A549 (cell line): ENCODE measurements at regions of chr17 and their contacts with region 1.

Region 1: GRCh38 chr17:82370471-82371332 is 863 bp upstream of the UTS2R start:
- DNase-seq: no peak
- ATAC-seq: no peak; a peak in 1 of 6 replicates
- H3K4me3 ChIP-seq: peak overlapping the region; percentile 13; the same call in 1 of the 3 replicates
- H3K27ac ChIP-seq: no peak overlapping the region
- H3K4me1 ChIP-seq: peaks cover 8% of the 10 kb centered on the region; the same call in 1 of the 3 replicates
- CTCF ChIP-seq: no peak
- EP300 ChIP-seq: no peak
- POLR2A ChIP-seq: no peak
- RAD21 ChIP-seq: no peak

Region 2: DNA sequence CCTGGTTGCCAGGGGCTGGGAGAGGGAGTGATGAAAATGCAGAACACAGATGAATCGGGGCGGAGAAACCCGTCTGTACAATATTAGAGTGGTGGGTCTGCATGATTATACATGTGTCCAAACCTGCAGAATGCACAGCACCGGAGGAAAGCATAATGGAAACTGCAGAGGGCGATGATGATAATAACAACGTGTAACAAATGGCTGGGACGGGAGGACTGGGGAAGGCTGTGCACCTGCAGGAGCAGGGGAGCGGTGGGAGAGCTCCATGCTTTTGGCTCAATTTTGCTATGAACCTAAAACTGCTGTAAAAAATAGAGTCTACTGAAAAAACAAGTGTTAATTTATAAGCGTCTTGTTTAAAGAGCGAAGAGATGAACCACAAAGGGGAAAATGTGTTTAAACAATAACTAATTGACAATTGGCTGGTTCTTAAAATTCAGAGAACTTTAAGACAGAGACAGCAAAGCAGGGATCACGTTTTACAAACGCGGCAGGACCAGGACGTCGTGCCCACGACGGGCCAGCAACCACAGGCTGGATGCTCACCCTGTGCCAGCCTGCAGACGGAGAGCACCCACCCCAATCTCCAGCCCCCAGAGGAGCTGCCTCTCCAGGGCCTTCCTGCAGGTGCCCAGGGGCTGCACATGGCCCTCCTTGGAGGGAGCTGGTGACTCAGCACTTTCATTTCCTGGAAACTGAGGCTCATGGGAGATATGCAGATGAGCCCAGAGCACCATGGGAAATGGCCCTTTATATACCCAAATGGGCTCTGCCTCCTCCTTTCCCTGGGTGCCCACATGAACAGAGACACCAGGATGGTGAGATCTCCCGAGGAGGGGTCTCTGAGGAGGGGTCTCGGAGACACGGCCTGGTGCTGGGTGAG is 12.0 kb before region 1 on chr17 and contains the start of gene TEX19:
- CTCF ChIA-PET with region 1: interaction called, 14 read pairs
- POLR2A ChIA-PET with region 1: no interaction called
- DNase-seq: peak; percentile 54 to 70
- ATAC-seq: peak; percentile 40 to 58; a peak in 5 of 6 replicates
- H3K4me3 ChIP-seq: no peak within 1 kb of the TSS
- H3K27ac ChIP-seq: peak within 1 kb of the TSS; percentile 38 to 70; a peak in 5 of 6 replicates
- H3K4me1 ChIP-seq: peaks cover 18% of the 10 kb centered on the region
- CTCF ChIP-seq: no peak
- EP300 ChIP-seq: no peak
- POLR2A ChIP-seq: no peak
- RAD21 ChIP-seq: peak in 1 of 2 experiments; percentile 19; a peak in 1 of 5 replicates
- polyA plus RNA-seq, gene TEX19: 0.32 and 0.43 TPM in 2 replicates